Activated naive CD4-positive, alpha-beta T cell treated with anti-CD3 and anti-CD28 coated beads for 36 hours (primary cell): ENCODE measurements at regions of chr7 and their contacts with region 1.

Region 1: DNA sequence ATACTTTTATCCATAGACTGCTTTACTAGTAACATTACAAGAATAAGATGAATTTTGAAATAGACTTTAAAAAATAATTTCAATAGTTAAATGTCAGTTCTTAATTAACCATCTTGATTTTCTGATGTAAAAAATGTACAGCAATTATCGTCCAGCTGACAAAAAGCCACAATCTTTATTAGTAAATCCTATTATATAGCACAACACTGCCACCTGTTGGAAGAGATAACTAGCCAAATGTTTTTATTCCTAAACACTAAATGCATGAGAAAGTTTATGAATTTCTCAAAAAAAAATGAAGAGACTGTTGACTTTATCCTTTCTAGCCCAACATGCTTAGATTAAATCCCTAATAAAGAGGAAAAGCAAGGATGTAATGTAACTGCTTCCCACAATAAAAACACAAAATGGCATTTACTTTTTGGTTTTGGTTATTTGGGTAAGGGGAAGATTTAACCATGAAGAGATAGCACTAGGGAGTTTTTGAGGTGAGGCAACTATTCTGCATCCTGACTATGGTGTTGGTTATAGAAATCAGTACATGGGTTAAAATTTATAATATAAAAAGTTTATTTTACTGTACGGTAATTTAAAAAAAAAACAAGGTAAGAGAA is 8.0 kb downstream of the COA1 start:
- DNase-seq: no peak
- H3K4me3 Mint-ChIP-seq: no peak overlapping the region
- H3K27ac Mint-ChIP-seq: no peak overlapping the region
- H3K4me1 Mint-ChIP-seq: peaks cover 46% of the 10 kb centered on the region
- H3K27me3 Mint-ChIP-seq: no peaks in the 10 kb centered on the region

Region 2: GRCh38 chr7:43454936-43455518 is 266.3 kb before region 1 on chr7:
- CTCF ChIA-PET with region 1: no interaction called
- intact Hi-C with region 1: loop called (anchors 5 kb)
- DNase-seq: no peak
- H3K4me3 Mint-ChIP-seq: no peak overlapping the region
- H3K27ac Mint-ChIP-seq: no peak overlapping the region
- H3K4me1 Mint-ChIP-seq: no peaks in the 10 kb centered on the region
- H3K27me3 Mint-ChIP-seq: no peaks in the 10 kb centered on the region

Region 3: DNA sequence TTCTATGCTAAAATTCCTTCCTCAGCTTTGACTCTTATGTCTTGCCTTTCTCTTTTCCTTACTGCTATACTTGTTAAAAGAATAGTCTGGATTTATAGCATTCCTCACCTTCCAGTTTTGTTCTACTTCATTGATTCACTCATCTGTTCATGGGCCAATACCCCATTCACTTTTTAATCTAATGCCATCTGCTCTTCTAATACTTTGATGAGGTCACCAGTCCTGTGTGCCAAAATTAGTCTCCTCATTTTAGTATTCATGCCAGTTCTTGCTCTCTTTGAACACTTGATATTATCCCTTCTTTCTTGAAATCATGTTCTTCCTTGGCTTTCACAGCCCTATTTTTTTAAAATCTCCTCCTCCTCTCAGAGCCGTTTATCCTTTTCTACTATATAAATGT is 119.0 kb before region 1 on chr7:
- CTCF ChIA-PET with region 1: no interaction called
- intact Hi-C with region 1: no loop called
- DNase-seq: no peak
- H3K4me3 Mint-ChIP-seq: no peak overlapping the region
- H3K27ac Mint-ChIP-seq: no peak overlapping the region
- H3K4me1 Mint-ChIP-seq: peaks cover 46% of the 10 kb centered on the region
- H3K27me3 Mint-ChIP-seq: no peaks in the 10 kb centered on the region